Panc1 (cell line): ENCODE measurements at regions of chr1 and their contacts with region 1.

Region 1: GRCh38 chr1:18230840-18231239 is 123.2 kb downstream of the IGSF21 start:
- DNase-seq: no peak
- ATAC-seq: no peak
- H3K4me3 ChIP-seq: no peak overlapping the region
- H3K27ac ChIP-seq: no peak overlapping the region
- H3K4me1 ChIP-seq: no peaks in the 10 kb centered on the region
- H3K27me3 ChIP-seq: peaks cover 8% of the 10 kb centered on the region; the same call in 1 of the 2 replicates
- CTCF ChIP-seq: no peak

Region 2: DNA sequence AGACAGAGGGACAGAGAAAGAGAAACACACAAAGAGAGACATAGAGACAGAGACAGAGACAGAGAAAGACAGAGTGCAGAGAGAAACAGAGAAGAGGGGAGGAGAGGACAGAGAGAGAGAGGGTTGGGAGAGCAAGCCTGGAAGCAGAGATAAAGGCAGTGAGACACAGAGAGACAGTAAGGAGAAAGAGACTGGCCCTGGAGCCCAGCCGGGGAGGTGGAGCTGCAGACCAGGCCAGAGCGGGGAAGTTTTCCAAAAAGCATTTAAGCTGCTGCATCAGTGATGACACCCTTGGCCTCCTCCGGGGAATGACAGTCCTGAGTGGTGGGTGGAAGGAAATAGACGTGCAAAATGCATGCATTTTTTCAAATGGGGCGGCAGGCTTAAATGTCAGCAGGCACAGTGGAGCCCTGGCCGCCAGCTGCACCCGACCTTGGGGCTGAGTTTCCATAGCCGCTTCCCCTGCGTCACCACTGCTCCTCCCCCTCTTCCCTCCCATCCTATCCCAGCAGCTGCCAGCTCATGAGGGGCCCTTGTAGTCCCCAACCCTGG is 154.5 kb after region 1 on chr1:
- CTCF ChIA-PET with region 1: no interaction called
- POLR2A ChIA-PET with region 1: interaction called, 11 read pairs
- in situ Hi-C with region 1: no loop called
- intact Hi-C with region 1: no loop called
- DNase-seq: no peak
- ATAC-seq: no peak
- H3K4me3 ChIP-seq: no peak overlapping the region
- H3K27ac ChIP-seq: no peak overlapping the region
- H3K4me1 ChIP-seq: no peaks in the 10 kb centered on the region
- H3K27me3 ChIP-seq: peaks cover 3% of the 10 kb centered on the region; the same call in 1 of the 2 replicates
- CTCF ChIP-seq: no peak

Region 3: DNA sequence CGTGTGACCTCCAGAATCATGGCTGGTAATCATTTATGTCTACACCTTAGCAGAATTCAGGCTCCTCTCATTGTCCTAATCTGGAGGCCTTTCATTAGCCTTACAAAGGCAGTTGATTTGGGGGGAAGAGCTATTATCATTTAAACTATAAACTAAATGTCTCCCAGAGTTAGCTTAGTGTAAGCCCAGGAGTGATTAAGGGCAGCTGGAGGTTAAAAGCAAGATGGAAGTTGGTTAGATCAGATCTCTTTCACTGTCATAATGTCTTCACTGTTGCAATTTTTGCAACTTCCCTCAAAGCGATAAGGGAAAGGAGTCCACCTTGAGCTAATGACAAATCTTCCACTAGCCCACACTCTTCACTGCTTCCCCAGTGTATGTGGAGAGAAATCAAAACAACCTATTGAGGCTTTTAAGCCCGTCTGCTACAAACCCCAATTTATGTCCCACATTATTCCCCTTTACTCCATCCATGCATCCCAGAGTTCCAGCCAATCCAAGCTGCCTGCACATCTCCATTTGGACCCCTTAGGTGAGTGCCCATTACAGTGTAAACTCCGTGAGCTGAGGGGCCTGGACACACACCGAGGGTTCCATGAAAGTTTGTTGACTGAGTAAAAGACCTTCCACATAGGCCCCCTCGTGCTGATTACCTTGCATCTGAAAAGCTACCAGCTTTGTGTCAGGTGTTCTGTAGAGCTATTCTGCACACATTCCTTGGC is 188.4 kb after region 1 on chr1:
- CTCF ChIA-PET with region 1: no interaction called
- POLR2A ChIA-PET with region 1: no interaction called
- in situ Hi-C with region 1: no loop called
- intact Hi-C with region 1: no loop called
- DNase-seq: no peak
- ATAC-seq: no peak
- H3K4me3 ChIP-seq: no peak overlapping the region
- H3K27ac ChIP-seq: no peak overlapping the region
- H3K4me1 ChIP-seq: no peaks in the 10 kb centered on the region
- H3K27me3 ChIP-seq: peaks cover 4% of the 10 kb centered on the region; the same call in 1 of the 2 replicates
- CTCF ChIP-seq: no peak

Region 4: DNA sequence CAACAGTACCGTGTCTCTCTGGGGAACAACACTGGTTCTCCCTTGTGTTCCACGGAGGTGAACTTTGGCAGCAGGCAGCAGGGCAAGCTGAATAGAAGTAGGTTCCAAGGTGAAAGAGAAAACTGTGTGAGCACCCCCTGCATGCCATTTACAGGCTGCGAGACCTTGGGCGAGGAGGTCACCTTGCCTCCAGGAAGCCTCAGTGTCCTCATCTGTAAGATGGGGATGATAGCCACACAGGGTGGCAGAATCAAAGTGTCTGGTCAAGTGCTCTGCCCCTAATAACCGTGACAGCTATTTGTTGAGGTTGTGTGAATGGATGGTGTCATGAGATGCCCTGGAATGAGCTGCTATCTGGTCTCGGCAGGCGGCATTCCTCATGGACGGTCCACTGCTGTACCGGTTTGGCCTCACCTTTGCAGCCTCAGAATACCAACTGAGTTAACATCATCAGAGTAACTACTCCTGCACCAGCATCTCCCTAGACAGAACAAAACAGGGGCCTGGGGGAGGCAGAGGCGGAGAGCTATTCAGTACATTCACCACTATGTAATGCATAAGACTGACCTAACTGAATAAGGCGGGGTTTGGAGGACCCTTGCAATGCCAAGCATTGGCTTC is 242.5 kb after region 1 on chr1:
- CTCF ChIA-PET with region 1: interaction called, 10 read pairs
- POLR2A ChIA-PET with region 1: no interaction called
- in situ Hi-C with region 1: no loop called
- intact Hi-C with region 1: no loop called
- DNase-seq: no peak
- ATAC-seq: no peak
- H3K4me3 ChIP-seq: no peak overlapping the region
- H3K27ac ChIP-seq: no peak overlapping the region
- H3K4me1 ChIP-seq: no peaks in the 10 kb centered on the region
- H3K27me3 ChIP-seq: 0 out of 2 replicates have a peak, but pooled peaks cover 2% of the 10 kb centered on the region
- CTCF ChIP-seq: no peak